ENCODE measurements at regions of chr6 and their contacts with region 1.

Region 1: GRCh38 chr6:41449399-41450245 is 96.6 kb upstream of the FOXP4 start:
- DNase-seq: peak in 1 of 2 donors; percentile 69
- ATAC-seq: peak; percentile 48 to 66
- H3K4me3 ChIP-seq: no peak overlapping the region
- H3K27ac ChIP-seq: peak overlapping the region; percentile 31 to 88 (median 60)
- H3K4me1 ChIP-seq: peaks cover 20 to 25% of the 10 kb centered on the region in 2 donors
- H3K27me3 ChIP-seq: no peaks in the 10 kb centered on the region
- CTCF ChIP-seq: no peak
- POLR2A ChIP-seq: no peak

Region 2: GRCh38 chr6:41488433-41489119 is 39.0 kb after region 1 on chr6:
- in situ Hi-C with region 1: no loop called
- intact Hi-C with region 1: no loop called
- DNase-seq: no peak
- ATAC-seq: no peak
- H3K4me3 ChIP-seq: no peak overlapping the region
- H3K27ac ChIP-seq: no peak overlapping the region
- H3K4me1 ChIP-seq: no peaks in the 10 kb centered on the region
- H3K27me3 ChIP-seq: peaks cover 0 to 7% (median 0%) of the 10 kb centered on the region in 3 donors
- CTCF ChIP-seq: no peak
- POLR2A ChIP-seq: no peak

Region 3: GRCh38 chr6:41505122-41506049 is 55.8 kb after region 1 on chr6:
- in situ Hi-C with region 1: no loop called
- intact Hi-C with region 1: loop called (anchors 5 kb)
- DNase-seq: peak; percentile 33 to 51
- ATAC-seq: peak; percentile 50 to 64
- H3K4me3 ChIP-seq: peak overlapping the region; percentile 40 to 50 (median 47)
- H3K27ac ChIP-seq: peak overlapping the region in 3 of 4 donors; percentile 64 to 76 (median 66)
- H3K4me1 ChIP-seq: peaks cover 6 to 21% of the 10 kb centered on the region in 2 donors
- H3K27me3 ChIP-seq: peaks cover 21 to 32% (median 30%) of the 10 kb centered on the region in 3 donors
- CTCF ChIP-seq: no peak
- POLR2A ChIP-seq: no peak

Region 4: GRCh38 chr6:41705996-41706835 is 256.6 kb after region 1 on chr6:
- in situ Hi-C with region 1: no loop called
- intact Hi-C with region 1: loop called (anchors 5 kb)
- DNase-seq: peak; percentile 88 to 93
- ATAC-seq: peak; percentile 79 to 83
- H3K4me3 ChIP-seq: peak overlapping the region in 3 of 4 donors; percentile 13 to 30 (median 28)
- H3K27ac ChIP-seq: peak overlapping the region; percentile 94 to 98 (median 96)
- H3K4me1 ChIP-seq: peaks cover 90 to 93% of the 10 kb centered on the region in 2 donors
- H3K27me3 ChIP-seq: no peaks in the 10 kb centered on the region
- CTCF ChIP-seq: peak; percentile 89 to 98 (median 94)
- POLR2A ChIP-seq: peak; percentile 54 to 70